ENCODE measurements at regions of chr17 and their contacts with region 1.

Region 1: GRCh38 chr17:4161179-4161559 is 18.2 kb downstream of the CYB5D2 start:
- DNase-seq: peak; percentile 69
- H3K4me3 ChIP-seq: no peak overlapping the region
- H3K27ac ChIP-seq: no peak overlapping the region
- H3K4me1 ChIP-seq: peaks cover 4% of the 10 kb centered on the region
- H3K27me3 ChIP-seq: no peaks in the 10 kb centered on the region
- CTCF ChIP-seq: no peak
- POLR2A ChIP-seq: no peak

Region 2: DNA sequence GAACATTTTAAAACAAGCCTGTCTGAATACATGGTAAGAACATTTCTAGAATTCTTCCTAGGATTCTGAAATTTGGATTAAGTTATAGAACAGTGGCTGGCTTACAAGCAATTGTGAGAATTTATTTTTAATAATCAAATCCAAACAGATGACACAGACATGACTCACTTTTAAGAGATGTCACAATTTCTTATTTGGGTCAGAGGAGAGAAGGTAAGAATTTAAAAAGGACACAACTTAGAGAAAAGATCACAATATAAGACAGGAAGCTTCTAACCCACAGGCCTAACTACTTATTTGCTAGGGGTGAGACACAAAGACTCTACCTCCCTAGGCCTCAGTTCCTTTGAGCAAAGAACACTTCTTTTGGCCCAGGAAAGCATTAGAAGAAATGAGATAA is 51.0 kb before region 1 on chr17:
- CTCF ChIA-PET with region 1: no interaction called
- POLR2A ChIA-PET with region 1: no interaction called
- dilution Hi-C with region 1: no loop called
- intact Hi-C with region 1: loop called (anchors 1 kb)
- DNase-seq: peak; percentile 20
- H3K4me3 ChIP-seq: no peak overlapping the region
- H3K27ac ChIP-seq: peak overlapping the region; percentile 28
- H3K4me1 ChIP-seq: peaks cover 17% of the 10 kb centered on the region
- H3K27me3 ChIP-seq: no peaks in the 10 kb centered on the region
- CTCF ChIP-seq: no peak
- POLR2A ChIP-seq: no peak

Region 3: GRCh38 chr17:4143563-4144421 is 17.4 kb before region 1 on chr17:
- CTCF ChIA-PET with region 1: interaction called, 6 read pairs
- POLR2A ChIA-PET with region 1: interaction called, 11 read pairs
- dilution Hi-C with region 1: no loop called
- intact Hi-C with region 1: no loop called
- DNase-seq: peak; percentile 94
- H3K4me3 ChIP-seq: peak overlapping the region; percentile 49 to 87 (median 75)
- H3K27ac ChIP-seq: peak overlapping the region; percentile 90
- H3K4me1 ChIP-seq: peaks cover 15% of the 10 kb centered on the region
- H3K27me3 ChIP-seq: no peaks in the 10 kb centered on the region
- CTCF ChIP-seq: no peak
- POLR2A ChIP-seq: peak; percentile 94